Posterior vena cava (tissue), 2 donors: ENCODE measurements at regions of chr5 and their contacts with region 1.

Region 1: GRCh38 chr5:141590127-141590526 is 28.7 kb downstream of the DIAPH1 start:
- DNase-seq: no peak

Region 2: DNA sequence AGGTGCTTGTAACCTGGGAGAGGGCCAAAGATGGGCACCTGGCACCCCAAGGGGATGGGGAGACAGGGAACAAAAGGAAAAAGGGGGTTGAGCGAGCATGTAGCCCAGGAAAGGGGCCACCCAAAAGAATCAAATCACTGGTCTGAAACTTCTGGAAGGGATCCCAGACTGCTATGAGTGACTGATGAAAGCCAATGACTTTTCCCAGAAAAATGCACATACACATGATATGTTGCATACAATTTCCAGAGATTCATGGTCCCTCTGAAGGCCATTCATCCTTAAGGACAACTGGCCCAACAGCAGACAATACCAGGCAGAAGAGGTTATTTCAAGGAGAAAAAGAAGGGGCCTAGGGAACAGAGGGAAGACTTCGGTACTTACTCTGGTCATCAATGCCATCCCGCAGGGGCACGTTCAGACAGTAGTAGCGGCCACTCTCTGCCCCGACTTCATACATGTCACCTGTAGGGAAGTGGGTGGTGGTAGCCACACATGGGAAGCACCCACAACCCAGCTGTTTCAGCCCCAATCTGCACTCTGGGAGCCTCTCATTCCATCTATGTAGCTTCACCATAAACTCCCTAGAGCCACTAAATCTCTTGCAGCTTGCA is 38.2 kb after region 1 on chr5:
- intact Hi-C with region 1: no loop called
- DNase-seq: no peak

Region 3: GRCh38 chr5:142994218-142994617 is 1404.1 kb after region 1 on chr5:
- intact Hi-C with region 1: loop called in 1 of 2 experiments (anchors 5 kb)
- DNase-seq: no peak